Motor neuron (in vitro differentiated cells): ENCODE measurements at regions of chr2 and their contacts with region 1.

Region 1: DNA sequence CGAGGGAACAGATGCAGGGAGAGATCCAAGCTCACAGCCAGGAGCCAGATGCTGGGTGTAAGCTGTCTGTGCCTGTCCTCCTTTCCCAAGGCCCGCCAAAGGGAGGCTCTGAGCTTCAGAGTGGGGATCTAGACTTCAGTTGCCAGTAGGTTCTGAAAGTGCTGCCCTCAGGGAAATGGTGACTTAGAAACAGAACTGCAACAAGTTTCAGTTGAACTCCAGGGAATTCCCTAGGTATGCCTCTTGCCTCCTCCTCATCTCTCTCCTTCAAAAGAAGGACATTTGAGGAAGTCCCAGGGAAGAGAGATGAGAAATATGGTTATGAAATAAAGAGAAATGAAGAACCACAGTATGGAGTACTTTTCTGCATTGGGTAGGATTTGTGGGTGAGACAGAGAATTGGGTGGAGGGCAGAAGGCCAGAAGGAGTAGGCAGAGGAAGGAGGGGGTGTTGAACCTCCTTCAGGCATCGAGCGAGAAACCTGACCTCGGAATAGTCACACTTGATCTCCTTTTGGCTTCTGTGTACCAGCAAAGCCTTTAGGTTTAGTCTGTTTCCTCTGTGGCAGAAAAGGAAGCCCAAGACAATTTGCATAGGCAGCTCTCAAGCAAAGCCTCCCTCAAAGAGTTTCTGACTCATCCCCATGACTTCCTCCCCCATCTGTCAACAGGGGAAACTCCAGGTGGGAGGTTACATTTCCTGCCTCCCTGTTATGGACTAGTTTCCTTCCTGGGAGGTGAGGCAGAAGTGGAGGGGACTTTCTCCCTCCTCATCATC is 45.7 kb downstream of the QPCT start:
- ATAC-seq: peak in 4 of 8 experiments; percentile 32 to 90 (median 84)
- H3K4me3 ChIP-seq: no peak overlapping the region
- H3K27ac ChIP-seq: no peak overlapping the region
- H3K4me1 ChIP-seq: peaks cover under 1 to 2% of the 10 kb centered on the region in 2 donors

Region 2: GRCh38 chr2:36027616-36028015 is 1362.6 kb before region 1 on chr2:
- in situ Hi-C with region 1: no loop called
- ATAC-seq: peak in 5 of 8 experiments; percentile 35 to 64 (median 48)
- H3K4me3 ChIP-seq: no peak overlapping the region
- H3K27ac ChIP-seq: no peak overlapping the region
- H3K4me1 ChIP-seq: peaks cover 0 to 8% of the 10 kb centered on the region in 2 donors

Region 3: DNA sequence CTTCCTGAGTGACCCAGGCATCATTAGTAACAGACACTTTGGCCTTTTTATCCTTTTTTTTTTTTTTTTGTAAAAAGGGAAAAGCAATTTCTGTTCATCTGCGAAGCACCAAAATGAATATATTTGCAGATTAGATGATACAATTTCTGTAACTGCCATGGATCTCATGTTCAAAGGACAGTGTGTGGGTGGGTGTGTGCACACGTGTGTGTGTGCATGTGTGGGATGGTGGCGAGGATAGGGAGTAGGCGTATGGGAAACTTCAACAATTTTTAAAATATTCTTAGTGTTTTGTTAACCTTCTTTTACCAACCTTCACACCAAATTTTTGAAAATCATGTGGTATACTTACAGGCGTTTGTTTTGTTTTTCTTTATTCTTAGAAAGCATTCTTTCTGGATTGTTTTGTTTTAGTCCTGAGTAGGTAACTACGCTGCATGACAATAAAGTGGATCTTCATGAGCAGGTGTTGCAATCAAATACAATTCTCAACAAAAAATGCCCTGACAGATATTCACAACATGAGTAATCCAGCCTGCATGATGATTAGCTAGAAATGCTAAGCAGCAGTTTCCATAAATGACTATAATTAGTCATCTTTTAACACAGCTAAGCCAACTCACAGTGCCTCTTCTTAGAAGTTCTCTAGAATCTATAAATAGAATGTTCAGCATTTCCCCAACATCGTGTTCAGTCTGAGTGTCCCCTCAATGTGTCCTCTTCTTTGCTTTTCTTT is 481.4 kb after region 1 on chr2:
- in situ Hi-C with region 1: loop called in 5 of 9 experiments (anchors 10 to 25 kb)
- ATAC-seq: peak; percentile 26 to 97 (median 72)
- H3K4me3 ChIP-seq: no peak overlapping the region
- H3K27ac ChIP-seq: no peak overlapping the region
- H3K4me1 ChIP-seq: peaks cover 7 to 11% of the 10 kb centered on the region in 2 donors

Region 4: DNA sequence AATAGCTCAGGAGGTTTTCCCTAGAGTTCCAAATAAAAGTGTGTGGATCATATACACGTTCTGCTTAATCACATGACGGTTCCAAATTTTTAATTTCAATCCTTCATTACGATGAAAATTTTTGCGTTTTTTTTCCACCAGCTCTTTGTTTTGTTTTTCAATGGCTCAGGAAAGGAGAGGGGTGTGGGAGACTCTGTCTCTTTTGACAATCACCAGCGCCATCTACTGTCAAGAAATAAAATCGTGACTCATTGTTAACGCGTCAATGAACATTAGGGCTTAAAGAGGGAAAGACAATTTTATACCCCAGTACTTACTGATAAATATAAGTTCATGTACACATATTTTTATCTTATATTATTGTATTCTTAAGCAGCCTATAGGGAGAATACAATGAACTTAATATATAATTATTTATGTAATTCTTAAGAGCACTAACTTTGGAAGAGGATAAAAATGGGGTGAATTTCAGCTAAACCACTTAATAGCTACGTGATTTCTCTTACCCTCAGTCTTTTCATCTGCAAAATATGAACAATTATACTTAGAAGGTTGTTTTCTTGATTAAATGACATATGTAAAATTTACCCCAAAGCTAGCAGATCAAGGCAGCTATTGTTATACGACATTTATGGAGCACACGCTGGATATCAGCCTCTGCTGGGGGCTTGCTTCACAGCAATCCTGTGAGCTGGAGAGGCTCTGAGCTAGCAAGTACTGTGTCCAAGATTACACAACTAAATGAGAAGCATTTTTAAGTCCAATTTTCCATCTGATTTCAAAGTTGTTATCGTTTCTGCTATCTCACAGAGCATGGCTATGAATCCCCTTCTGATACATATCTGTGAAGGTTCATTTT is 487.5 kb after region 1 on chr2:
- in situ Hi-C with region 1: loop called in 5 of 9 experiments (anchors 10 to 25 kb)
- ATAC-seq: peak; percentile 68 to 90 (median 80)
- H3K4me3 ChIP-seq: no peak overlapping the region
- H3K27ac ChIP-seq: no peak overlapping the region
- H3K4me1 ChIP-seq: peaks cover 7 to 9% of the 10 kb centered on the region in 2 donors

Region 5: DNA sequence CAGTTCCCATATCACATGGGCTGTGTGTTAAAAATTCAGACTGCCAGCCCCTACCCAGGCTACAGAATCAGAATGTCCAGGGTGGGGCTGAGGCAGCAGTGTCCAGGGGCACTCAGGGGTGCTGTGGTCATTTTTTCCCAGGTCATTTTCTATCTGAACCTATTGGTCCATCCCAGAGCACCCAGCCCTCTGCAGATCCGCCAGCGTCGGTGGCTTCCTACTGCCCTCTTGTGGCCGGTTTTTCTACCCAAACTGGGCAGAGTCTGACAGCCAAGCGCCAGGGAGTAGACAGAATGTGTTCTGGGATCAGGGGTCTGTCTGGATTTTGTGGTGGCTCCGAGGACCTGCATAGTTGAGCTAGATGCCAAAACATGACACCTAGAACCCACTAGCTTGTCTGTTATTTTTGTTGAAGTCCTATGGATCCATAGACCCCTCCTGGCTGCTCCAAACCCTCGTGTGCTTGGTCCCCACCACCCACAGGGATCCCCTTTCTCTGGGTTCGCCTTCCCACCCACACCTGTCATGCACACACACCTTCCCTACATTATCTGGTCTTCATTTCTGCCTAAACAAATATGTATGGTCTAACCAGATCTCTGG is 500.8 kb after region 1 on chr2:
- in situ Hi-C with region 1: loop called in 3 of 9 experiments (anchors 25 kb)
- ATAC-seq: peak; percentile 76 to 100 (median 87)
- H3K4me3 ChIP-seq: no peak overlapping the region
- H3K27ac ChIP-seq: no peak overlapping the region
- H3K4me1 ChIP-seq: no peaks in the 10 kb centered on the region

Region 6: GRCh38 chr2:38274286-38275276 is 884.4 kb after region 1 on chr2:
- in situ Hi-C with region 1: loop called in 2 of 9 experiments (anchors 10 to 25 kb)
- ATAC-seq: peak in 7 of 8 experiments; percentile 50 to 91 (median 68)
- H3K4me3 ChIP-seq: no peak overlapping the region
- H3K27ac ChIP-seq: no peak overlapping the region
- H3K4me1 ChIP-seq: no peaks in the 10 kb centered on the region